ENCODE measurements at regions of chr1 and their contacts with region 1.

Region 1: DNA sequence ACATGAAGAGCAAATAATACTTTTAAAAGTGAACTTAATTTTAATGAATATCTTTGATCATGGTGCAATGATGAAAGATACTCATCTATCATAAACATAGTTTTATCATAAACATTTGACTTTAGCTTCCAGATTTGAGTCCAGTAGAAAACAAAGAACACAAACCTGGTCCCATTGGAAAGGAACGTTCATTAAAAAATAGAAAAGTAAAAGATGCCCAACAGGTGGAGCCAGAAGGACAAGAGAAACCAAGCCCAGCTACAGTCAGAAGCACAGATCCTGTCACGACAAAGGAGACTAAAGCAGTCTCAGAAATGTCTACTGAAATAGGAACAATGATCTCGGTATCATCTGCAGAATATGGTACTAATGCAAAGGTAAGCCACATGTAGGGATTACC is 55.6 kb upstream of the MYOCOS start:
- DNase-seq: no peak
- ATAC-seq: no peak
- H3K4me3 ChIP-seq: no peak overlapping the region
- H3K27ac ChIP-seq: no peak overlapping the region
- H3K4me1 ChIP-seq: no peaks in the 10 kb centered on the region
- H3K27me3 ChIP-seq: no peaks in the 10 kb centered on the region
- CTCF ChIP-seq: peak in 2 of 9 donors; percentile 6 to 11

Region 2: GRCh38 chr1:171457412-171457811 is 109.1 kb before region 1 on chr1:
- intact Hi-C with region 1: no loop called
- DNase-seq: no peak
- ATAC-seq: peak in 1 of 8 donors; percentile 27
- H3K4me3 ChIP-seq: no peak overlapping the region
- H3K27ac ChIP-seq: no peak overlapping the region
- H3K4me1 ChIP-seq: no peaks in the 10 kb centered on the region
- H3K27me3 ChIP-seq: peaks cover 0 to 4% (median 0%) of the 10 kb centered on the region in 7 donors
- CTCF ChIP-seq: no peak

Region 3: GRCh38 chr1:171595324-171595723 is 28.9 kb after region 1 on chr1:
- intact Hi-C with region 1: loop called in 1 of 10 experiments (anchors 2 kb)
- DNase-seq: no peak
- ATAC-seq: peak in 4 of 8 donors; percentile 26 to 78 (median 52)
- H3K4me3 ChIP-seq: no peak overlapping the region
- H3K27ac ChIP-seq: no peak overlapping the region
- H3K4me1 ChIP-seq: peaks cover 0 to 12% (median 0%) of the 10 kb centered on the region in 9 donors
- H3K27me3 ChIP-seq: no peaks in the 10 kb centered on the region
- CTCF ChIP-seq: no peak

Measured in heart right ventricle (tissue), 16 donors.